ENCODE measurements at regions of chr2 and their contacts with region 1.

Region 1: GRCh38 chr2:237060534-237061312 is 25.0 kb upstream of the COPS8 start:
- DNase-seq: no peak
- ATAC-seq: peak; percentile 79

Region 2: DNA sequence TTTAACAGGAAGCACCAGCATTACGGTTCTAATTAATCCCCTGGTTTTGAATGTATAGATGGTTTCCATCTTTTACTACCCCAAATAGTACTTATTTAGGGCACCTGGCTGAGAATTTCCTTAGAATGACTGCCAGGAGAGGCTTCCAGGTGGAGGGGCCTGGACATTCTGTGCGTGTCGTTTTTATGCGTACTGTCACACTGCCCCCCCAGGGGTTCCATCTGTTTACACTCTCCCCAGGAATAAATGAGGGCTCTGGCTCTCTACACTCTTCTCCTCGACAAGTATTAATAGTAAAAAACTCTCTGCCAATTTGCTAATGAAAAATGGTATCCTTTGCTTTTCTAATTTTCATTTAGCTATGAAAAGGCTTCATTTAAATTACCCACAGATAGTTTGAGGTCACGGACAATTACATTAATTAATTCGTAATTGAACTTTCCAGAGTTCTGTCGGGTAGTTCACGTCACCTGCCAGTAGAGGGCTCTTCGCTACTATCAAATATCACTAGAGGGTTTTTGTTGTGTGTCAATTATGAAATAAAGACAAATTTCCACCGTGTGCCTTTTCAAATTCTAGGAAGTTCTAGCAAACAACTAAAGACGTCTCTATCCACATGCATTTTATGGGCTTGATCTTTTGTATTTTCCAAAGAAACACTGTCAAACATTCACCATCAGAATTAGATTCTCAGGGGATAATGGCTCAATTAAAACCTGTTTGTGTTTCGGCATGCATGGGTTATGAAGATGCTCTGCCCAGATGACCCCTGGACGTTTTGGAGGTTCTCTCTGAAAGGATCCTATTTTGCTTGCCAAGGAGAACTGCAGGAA is 707.7 kb before region 1 on chr2:
- intact Hi-C with region 1: loop called (anchors 5 kb)
- DNase-seq: no peak
- ATAC-seq: peak; percentile 45